ENCODE measurements at regions of chr18 and their contacts with region 1.

Region 1: DNA sequence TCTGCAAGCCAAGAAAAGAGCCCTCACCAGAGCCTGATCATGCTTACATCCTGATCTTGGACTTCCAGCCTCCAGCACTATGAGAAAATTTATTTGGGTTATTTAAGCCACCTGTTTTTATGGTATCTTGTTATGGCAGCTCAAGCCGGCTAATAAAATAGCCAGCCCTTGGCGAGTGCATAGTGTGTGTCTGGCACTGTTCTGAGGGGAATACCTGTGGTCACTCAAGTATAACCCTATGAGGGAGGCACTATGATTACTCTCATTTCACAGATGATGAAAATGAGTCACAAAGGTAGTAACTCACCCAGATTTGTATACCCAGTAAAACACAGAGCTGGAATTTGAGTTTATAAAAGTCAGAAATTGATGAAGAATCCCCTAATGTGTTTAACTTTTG is 556.9 kb upstream of the SETBP1 start:
- DNase-seq: no peak
- H3K4me3 ChIP-seq: no peak overlapping the region
- H3K27ac ChIP-seq: no peak overlapping the region
- H3K4me1 ChIP-seq: peaks cover 0 to 25% (median 10%) of the 10 kb centered on the region in 4 donors
- H3K27me3 ChIP-seq: no peaks in the 10 kb centered on the region
- CTCF ChIP-seq: no peak
- EP300 ChIP-seq: no peak
- POLR2A ChIP-seq: no peak

Region 2: DNA sequence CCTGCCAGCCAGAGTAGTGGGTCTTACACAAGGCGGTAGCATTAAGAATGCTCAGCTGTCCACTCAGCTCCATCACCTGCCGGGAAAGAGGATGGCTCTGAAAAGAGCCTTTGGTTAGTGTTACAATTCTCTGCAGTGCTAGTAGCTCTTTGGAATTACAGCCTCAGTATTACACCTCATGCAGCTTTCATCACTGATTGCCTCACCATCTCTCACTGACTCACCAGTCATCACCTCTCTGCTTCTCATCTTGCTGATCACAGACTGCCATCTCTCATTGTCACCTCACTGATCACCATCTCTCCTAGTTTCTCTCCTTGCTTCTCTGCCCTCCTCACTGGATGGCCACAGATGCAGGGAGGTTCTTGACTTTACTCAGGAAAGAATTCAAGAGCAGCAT is 16.6 kb before region 1 on chr18:
- in situ Hi-C with region 1: no loop called
- intact Hi-C with region 1: loop called (anchors 1 kb)
- DNase-seq: no peak
- H3K4me3 ChIP-seq: no peak overlapping the region
- H3K27ac ChIP-seq: no peak overlapping the region
- H3K4me1 ChIP-seq: no peaks in the 10 kb centered on the region
- H3K27me3 ChIP-seq: no peaks in the 10 kb centered on the region
- CTCF ChIP-seq: no peak
- EP300 ChIP-seq: no peak
- POLR2A ChIP-seq: no peak

Region 3: GRCh38 chr18:44325903-44326635 is 202.3 kb after region 1 on chr18:
- in situ Hi-C with region 1: loop called in 1 of 4 experiments (anchors 25 kb)
- intact Hi-C with region 1: no loop called
- DNase-seq: peak; percentile 66
- H3K4me3 ChIP-seq: no peak overlapping the region
- H3K27ac ChIP-seq: no peak overlapping the region
- H3K4me1 ChIP-seq: peaks cover 0 to 4% (median 0%) of the 10 kb centered on the region in 4 donors
- H3K27me3 ChIP-seq: no peaks in the 10 kb centered on the region
- CTCF ChIP-seq: peak; percentile 44 to 60 (median 52)
- EP300 ChIP-seq: no peak
- POLR2A ChIP-seq: no peak

Region 4: DNA sequence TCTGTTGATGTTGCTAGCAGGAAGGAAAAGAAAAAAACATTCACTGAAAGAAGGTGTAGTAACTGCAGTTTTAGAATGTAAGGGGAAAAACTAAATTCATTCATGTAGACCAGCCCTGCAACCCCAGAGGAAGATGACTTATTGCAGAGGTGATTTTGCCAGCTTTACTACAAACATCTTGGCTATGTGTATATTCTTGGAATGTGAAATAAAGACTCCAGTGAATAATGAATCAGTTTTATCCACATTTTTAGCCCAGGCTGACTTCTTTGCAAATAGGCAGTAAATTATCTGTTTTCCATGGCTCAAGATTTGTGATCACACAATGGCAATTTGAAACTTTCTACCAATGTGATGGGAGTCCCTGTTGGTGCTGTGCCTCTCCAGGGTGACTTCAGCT is 350.8 kb after region 1 on chr18:
- in situ Hi-C with region 1: no loop called
- intact Hi-C with region 1: no loop called
- DNase-seq: no peak
- H3K4me3 ChIP-seq: no peak overlapping the region
- H3K27ac ChIP-seq: no peak overlapping the region
- H3K4me1 ChIP-seq: no peaks in the 10 kb centered on the region
- H3K27me3 ChIP-seq: no peaks in the 10 kb centered on the region
- CTCF ChIP-seq: no peak
- EP300 ChIP-seq: no peak
- POLR2A ChIP-seq: no peak

Region 5: DNA sequence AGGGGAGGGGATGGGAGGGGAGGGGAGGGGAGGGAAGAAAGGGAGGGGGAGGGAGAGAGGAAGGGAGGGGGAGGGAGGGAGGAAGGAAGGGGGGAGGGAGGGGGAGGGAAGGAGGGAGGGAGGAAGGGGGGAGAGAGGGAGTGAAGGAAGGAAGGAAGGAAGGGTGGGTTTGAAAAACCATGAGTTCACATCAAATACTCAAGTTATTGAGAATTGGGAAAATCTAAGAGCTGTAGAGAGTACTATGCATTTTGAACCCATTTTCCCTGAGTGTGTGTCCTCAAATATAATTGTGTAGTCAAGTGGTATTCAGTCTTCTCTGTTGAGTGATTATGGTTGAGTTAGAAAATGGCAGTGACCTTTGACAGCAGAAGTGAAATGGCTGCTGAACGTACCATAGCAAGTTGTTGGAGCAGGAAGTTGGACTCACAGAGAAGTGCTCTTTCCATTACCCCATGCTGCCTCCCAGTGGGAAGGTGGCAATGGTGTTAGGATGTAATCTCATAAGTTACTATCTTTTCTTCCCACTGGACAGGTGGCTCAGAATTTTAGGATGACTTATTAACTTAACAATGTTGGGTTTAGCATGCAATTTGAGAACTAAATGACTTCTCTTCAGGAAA is 771.5 kb after region 1 on chr18:
- in situ Hi-C with region 1: loop called in 1 of 4 experiments (anchors 25 kb)
- intact Hi-C with region 1: no loop called
- DNase-seq: peak; percentile 76
- H3K4me3 ChIP-seq: no peak overlapping the region
- H3K27ac ChIP-seq: no peak overlapping the region
- H3K4me1 ChIP-seq: peaks cover 0 to 9% (median 2%) of the 10 kb centered on the region in 4 donors
- H3K27me3 ChIP-seq: no peaks in the 10 kb centered on the region
- CTCF ChIP-seq: peak; percentile 31 to 78 (median 49)
- EP300 ChIP-seq: no peak
- POLR2A ChIP-seq: no peak

Region 6: DNA sequence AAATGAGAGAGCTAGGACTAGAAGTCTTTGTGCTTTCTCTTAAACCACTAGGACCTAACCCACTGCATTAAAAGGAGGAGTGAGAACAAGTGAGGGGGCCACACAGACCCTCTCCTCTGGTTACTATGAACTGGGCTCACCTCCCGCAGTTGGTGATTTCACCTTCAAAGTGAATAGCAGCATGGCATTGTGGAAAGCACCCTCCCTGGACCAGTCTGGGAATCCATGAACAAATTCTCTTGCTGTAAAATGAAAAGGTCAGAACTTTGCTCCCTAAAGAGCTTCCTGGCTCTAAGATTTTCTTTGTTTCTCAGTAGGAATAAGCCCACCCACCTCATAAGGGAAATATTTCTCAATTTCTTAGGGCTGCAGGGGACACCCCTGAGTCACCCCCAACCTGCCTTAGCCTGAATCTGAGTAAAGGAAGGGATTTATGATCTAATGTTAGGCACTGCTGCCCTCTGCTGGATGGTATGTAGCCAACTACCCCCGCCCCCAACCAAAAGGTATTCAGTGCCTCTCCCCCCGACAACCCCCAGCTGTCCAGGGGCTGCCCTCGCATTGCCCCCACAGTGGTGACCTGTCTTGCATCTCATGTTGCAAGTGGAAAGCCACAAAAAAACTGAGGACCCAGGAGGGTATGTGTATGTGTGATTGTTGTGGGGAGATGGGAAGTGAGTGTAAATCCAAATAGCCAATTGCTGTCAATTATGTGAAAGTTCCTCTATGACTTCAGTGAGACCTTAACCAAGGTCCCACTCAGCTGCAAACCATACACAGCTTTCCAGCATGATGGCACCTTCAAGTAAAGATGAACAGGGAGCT is 1260.6 kb after region 1 on chr18:
- in situ Hi-C with region 1: loop called in 1 of 4 experiments (anchors 25 kb)
- intact Hi-C with region 1: no loop called
- DNase-seq: peak; percentile 54
- H3K4me3 ChIP-seq: no peak overlapping the region
- H3K27ac ChIP-seq: no peak overlapping the region
- H3K4me1 ChIP-seq: peaks cover 0 to 3% (median 0%) of the 10 kb centered on the region in 4 donors
- H3K27me3 ChIP-seq: no peaks in the 10 kb centered on the region
- CTCF ChIP-seq: peak; percentile 53 to 73 (median 66)
- EP300 ChIP-seq: no peak
- POLR2A ChIP-seq: no peak